ENCODE measurements at regions of chr7 and their contacts with region 1.

Region 1: GRCh38 chr7:148914208-148914777 is 30.2 kb upstream of the EZH2 start:
- DNase-seq: peak; percentile 77
- ATAC-seq: peak; percentile 50
- H3K4me3 Mint-ChIP-seq: peak overlapping the region; percentile 63
- H3K27ac Mint-ChIP-seq: peak overlapping the region; percentile 99
- H3K4me1 Mint-ChIP-seq: peaks cover 74% of the 10 kb centered on the region
- H3K27me3 Mint-ChIP-seq: no peaks in the 10 kb centered on the region
- CTCF ChIP-seq: no peak

Region 2: GRCh38 chr7:148867596-148868377 is 46.5 kb before region 1 on chr7:
- CTCF ChIA-PET with region 1: no interaction called
- POLR2A ChIA-PET with region 1: no interaction called
- intact Hi-C with region 1: loop called (anchors 5 kb)
- DNase-seq: no peak
- ATAC-seq: no peak
- H3K4me3 Mint-ChIP-seq: no peak overlapping the region
- H3K27ac Mint-ChIP-seq: no peak overlapping the region
- H3K4me1 Mint-ChIP-seq: peaks cover 58% of the 10 kb centered on the region
- H3K27me3 Mint-ChIP-seq: no peaks in the 10 kb centered on the region
- CTCF ChIP-seq: no peak

Region 3: GRCh38 chr7:148884299-148885022 is 29.8 kb before region 1 on chr7:
- CTCF ChIA-PET with region 1: interaction called, 11 read pairs
- POLR2A ChIA-PET with region 1: interaction called, 80 read pairs
- intact Hi-C with region 1: loop called (anchors 1 kb)
- DNase-seq: peak; percentile 94
- ATAC-seq: peak; percentile 93
- H3K4me3 Mint-ChIP-seq: peak overlapping the region; percentile 94
- H3K27ac Mint-ChIP-seq: peak overlapping the region; percentile 98
- H3K4me1 Mint-ChIP-seq: peaks cover 30% of the 10 kb centered on the region
- H3K27me3 Mint-ChIP-seq: no peaks in the 10 kb centered on the region
- CTCF ChIP-seq: no peak

Region 4: GRCh38 chr7:148903504-148903903 is 10.8 kb before region 1 on chr7:
- CTCF ChIA-PET with region 1: interaction called, 3 read pairs
- POLR2A ChIA-PET with region 1: interaction called, 10 read pairs
- intact Hi-C with region 1: no loop called
- DNase-seq: no peak
- ATAC-seq: peak; percentile 53
- H3K4me3 Mint-ChIP-seq: no peak overlapping the region
- H3K27ac Mint-ChIP-seq: peak overlapping the region; percentile 0
- H3K4me1 Mint-ChIP-seq: peaks cover 19% of the 10 kb centered on the region
- H3K27me3 Mint-ChIP-seq: no peaks in the 10 kb centered on the region
- CTCF ChIP-seq: no peak

Region 5: DNA sequence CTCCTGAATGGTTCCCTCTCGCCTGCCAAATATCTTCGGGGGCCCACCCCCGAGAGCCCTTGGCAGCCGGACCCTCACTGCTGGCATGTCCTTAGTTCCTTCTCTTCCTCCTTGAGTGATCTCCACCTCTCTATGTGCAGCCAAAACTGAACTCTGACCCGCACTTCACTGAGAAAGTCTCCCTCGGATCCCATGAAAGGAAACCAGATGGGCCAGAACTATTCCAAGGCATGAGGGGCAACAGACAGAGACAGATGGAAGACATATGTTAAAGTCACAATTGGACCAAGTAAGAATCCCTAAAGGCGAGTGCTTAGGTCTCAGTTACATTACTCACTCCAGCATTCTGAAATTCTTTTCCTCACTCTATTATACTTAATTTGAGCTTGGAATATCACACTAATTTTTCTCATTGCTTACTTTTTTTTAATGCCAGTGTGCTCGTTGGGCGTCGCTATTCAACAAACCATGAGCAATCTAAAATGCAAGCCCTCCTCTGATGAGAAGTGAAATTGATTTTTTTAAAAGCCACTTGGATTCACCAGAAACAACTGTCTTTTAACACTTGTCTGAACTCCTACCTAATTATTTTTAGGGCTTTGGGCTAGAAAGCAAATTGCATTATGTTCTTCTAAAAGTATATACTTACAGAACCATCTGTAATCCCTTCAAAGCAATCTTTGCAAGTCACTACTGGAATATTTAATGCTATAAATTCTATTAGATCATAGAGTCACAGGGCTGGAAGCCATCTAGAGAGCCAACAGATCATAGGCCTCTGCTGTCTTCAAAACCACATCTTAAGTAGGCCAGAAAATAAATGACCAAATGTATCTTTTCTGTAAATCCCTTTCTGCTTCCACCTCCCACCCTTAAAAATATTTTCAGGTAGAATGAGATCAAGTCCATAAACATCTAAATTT is 13.1 kb after region 1 on chr7:
- CTCF ChIA-PET with region 1: interaction called, 9 read pairs
- POLR2A ChIA-PET with region 1: interaction called, 21 read pairs
- intact Hi-C with region 1: loop called (anchors 1 kb)
- DNase-seq: no peak
- ATAC-seq: no peak
- H3K4me3 Mint-ChIP-seq: no peak overlapping the region
- H3K27ac Mint-ChIP-seq: peak overlapping the region; percentile 87
- H3K4me1 Mint-ChIP-seq: peaks cover 52% of the 10 kb centered on the region
- H3K27me3 Mint-ChIP-seq: no peaks in the 10 kb centered on the region
- CTCF ChIP-seq: no peak

Region 6: DNA sequence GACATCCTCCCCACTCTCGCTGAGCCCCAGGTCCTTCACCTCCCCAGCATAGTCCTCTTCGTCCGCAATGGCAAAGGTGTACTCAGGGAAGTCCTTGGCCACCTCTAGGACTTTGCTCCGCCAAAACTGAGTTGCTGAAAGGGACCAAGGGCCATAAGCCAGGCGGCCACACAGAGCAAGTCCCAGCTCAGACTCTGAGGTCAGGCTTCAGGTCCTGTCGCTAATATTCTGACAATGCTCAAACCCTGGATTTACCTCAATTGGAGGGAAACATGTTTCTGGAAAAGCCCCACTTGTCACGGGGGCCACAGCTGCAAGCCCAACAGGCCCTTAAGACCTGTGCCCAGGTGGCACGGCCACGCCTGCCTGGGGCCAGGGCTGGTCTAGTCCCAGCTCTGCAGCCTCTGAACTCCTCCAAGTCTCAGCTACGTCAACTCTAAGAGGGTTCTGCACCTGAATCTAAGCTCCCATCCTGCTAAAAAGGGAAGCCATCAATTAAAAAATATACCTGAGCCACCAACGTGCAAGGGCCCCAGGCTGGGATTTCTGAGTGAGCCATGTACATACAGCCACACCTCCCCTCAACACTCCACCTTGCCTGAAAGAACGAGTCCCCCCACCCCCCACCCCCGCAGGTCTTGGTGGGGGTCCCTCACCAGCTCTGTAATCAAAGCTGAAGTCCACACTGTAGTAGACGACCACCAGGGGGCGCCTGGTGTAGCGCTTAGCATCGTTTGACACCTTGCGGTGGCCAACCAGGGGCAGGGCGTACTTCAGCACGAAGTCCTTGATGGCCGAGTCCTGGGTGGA is 91.2 kb after region 1 on chr7:
- CTCF ChIA-PET with region 1: no interaction called
- POLR2A ChIA-PET with region 1: no interaction called
- intact Hi-C with region 1: no loop called
- DNase-seq: peak; percentile 92
- ATAC-seq: peak; percentile 94
- H3K4me3 Mint-ChIP-seq: no peak overlapping the region
- H3K27ac Mint-ChIP-seq: peak overlapping the region; percentile 46
- H3K4me1 Mint-ChIP-seq: peaks cover 11% of the 10 kb centered on the region
- H3K27me3 Mint-ChIP-seq: no peaks in the 10 kb centered on the region
- CTCF ChIP-seq: peak; percentile 79

Region 7: GRCh38 chr7:149071641-149072437 is 157.5 kb after region 1 on chr7:
- CTCF ChIA-PET with region 1: no interaction called
- POLR2A ChIA-PET with region 1: no interaction called
- intact Hi-C with region 1: no loop called
- DNase-seq: peak; percentile 63
- ATAC-seq: peak; percentile 88
- H3K4me3 Mint-ChIP-seq: peak overlapping the region; percentile 52
- H3K27ac Mint-ChIP-seq: peak overlapping the region; percentile 75
- H3K4me1 Mint-ChIP-seq: peaks cover 2% of the 10 kb centered on the region
- H3K27me3 Mint-ChIP-seq: no peaks in the 10 kb centered on the region
- CTCF ChIP-seq: no peak